Naive thymus-derived CD4-positive, alpha-beta T cell (primary cell): ENCODE measurements at regions of chr17 and their contacts with region 1.

Region 1: DNA sequence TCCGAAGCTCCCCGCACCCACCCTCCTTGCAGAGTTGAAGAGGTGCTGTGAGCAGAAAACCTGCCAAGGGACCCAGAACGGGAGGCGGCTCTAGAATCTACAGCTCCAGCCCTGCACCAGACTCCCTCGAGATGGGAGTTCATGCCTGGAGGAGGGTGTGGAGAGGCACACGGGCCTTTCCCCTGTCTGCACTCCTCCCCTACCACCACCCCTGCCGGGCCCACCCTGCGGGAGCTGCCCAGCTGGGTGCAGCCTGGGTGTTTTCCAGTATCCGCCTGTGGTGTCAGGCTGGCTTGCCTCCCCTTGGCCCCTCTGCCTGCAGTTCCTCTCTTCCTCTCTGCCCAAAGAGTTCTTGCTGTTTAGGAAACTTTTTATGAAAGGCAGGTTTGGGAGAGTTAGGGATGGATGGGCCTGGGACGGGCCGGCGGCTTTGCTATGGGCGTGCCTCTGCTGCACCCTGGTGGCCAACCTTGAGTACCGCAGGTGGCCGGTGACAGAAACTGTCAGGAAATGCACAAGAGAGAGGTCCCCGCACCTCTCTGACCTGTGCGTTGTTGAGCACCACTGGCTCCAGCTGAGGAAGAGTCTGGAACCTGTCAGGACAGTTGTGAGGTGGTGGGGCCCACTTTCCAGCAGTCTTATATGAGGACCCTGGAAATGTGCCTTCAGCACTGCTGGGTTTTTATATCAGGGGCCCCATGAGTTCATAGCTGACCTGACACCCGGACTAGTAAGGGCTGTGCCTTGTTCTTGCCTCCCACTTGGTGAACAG is 354.1 kb downstream of the SEC14L1 start:
- DNase-seq: peak; percentile 60 to 82 (median 70)
- ATAC-seq: peak; percentile 90
- H3K4me3 ChIP-seq: no peak overlapping the region
- H3K4me3 Mint-ChIP-seq: peak overlapping the region in 6 of 10 donors; percentile 19 to 54 (median 44)
- H3K27ac ChIP-seq: peak overlapping the region; percentile 27
- H3K27ac Mint-ChIP-seq: peak overlapping the region; percentile 71 to 94 (median 91)
- H3K4me1 ChIP-seq: peaks cover 11 to 21% of the 10 kb centered on the region in 2 donors
- H3K4me1 Mint-ChIP-seq: peaks cover 5 to 37% (median 20%) of the 10 kb centered on the region in 7 donors
- H3K27me3 ChIP-seq: no peaks in the 10 kb centered on the region
- H3K27me3 Mint-ChIP-seq: no peaks in the 10 kb centered on the region

Region 2: GRCh38 chr17:77363821-77364361 is 131.0 kb before region 1 on chr17:
- CTCF ChIA-PET with region 1: no interaction called
- POLR2A ChIA-PET with region 1: no interaction called
- intact Hi-C with region 1: no loop called
- DNase-seq: peak in 4 of 9 donors; percentile 47 to 55 (median 50)
- ATAC-seq: peak; percentile 69
- H3K4me3 ChIP-seq: peak overlapping the region; percentile 40
- H3K4me3 Mint-ChIP-seq: peak overlapping the region; percentile 26 to 86 (median 76)
- H3K27ac ChIP-seq: peak overlapping the region; percentile 30
- H3K27ac Mint-ChIP-seq: peak overlapping the region in 8 of 9 donors; percentile 53 to 93 (median 80)
- H3K4me1 ChIP-seq: peaks cover 0 to 53% of the 10 kb centered on the region in 2 donors
- H3K4me1 Mint-ChIP-seq: peaks cover 39 to 62% (median 40%) of the 10 kb centered on the region in 7 donors
- H3K27me3 ChIP-seq: no peaks in the 10 kb centered on the region
- H3K27me3 Mint-ChIP-seq: peaks cover 0 to 11% (median 0%) of the 10 kb centered on the region in 5 donors

Region 3: DNA sequence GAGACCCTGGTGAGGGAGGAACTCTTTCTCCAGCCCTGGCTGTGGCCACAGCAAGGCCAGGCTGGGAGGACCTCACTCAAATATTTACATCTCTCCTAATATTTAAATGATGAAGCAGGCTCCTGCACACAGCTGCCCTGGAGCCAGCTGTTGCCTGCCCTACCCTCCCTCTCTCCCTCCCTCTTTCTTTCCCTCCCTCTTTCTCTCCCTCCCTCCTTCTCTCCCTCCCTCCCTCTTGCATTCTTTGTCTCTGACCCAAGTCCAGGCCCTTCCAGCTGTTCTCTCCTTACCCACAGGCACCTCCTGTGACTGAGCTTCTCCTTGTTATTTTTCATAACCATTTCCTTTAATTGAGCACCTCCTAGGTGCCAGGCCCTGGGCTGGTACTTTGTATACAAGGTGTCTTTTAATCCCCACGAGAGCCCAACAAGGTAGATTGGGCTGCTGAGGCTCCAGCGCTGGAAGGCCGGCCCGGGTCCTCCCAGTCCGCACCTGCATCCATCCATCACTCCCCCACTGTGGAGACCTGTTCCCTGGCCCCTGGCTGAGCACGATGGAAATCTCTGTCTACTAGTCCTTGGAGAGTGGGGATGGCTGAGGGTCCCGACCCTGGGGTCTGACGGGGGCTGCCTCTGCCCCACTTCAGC is 111.8 kb before region 1 on chr17:
- CTCF ChIA-PET with region 1: interaction called, 7 read pairs
- POLR2A ChIA-PET with region 1: interaction called, 6 read pairs
- intact Hi-C with region 1: loop called in 1 of 2 experiments (anchors 1 kb)
- DNase-seq: no peak
- ATAC-seq: no peak
- H3K4me3 ChIP-seq: peak overlapping the region; percentile 17
- H3K4me3 Mint-ChIP-seq: peak overlapping the region; percentile 60 to 90 (median 86)
- H3K27ac ChIP-seq: peak overlapping the region; percentile 58
- H3K27ac Mint-ChIP-seq: peak overlapping the region; percentile 76 to 94 (median 93)
- H3K4me1 ChIP-seq: peaks cover 73 to 83% of the 10 kb centered on the region in 2 donors
- H3K4me1 Mint-ChIP-seq: peaks cover 59 to 94% (median 89%) of the 10 kb centered on the region in 7 donors
- H3K27me3 ChIP-seq: no peaks in the 10 kb centered on the region
- H3K27me3 Mint-ChIP-seq: no peaks in the 10 kb centered on the region

Region 4: DNA sequence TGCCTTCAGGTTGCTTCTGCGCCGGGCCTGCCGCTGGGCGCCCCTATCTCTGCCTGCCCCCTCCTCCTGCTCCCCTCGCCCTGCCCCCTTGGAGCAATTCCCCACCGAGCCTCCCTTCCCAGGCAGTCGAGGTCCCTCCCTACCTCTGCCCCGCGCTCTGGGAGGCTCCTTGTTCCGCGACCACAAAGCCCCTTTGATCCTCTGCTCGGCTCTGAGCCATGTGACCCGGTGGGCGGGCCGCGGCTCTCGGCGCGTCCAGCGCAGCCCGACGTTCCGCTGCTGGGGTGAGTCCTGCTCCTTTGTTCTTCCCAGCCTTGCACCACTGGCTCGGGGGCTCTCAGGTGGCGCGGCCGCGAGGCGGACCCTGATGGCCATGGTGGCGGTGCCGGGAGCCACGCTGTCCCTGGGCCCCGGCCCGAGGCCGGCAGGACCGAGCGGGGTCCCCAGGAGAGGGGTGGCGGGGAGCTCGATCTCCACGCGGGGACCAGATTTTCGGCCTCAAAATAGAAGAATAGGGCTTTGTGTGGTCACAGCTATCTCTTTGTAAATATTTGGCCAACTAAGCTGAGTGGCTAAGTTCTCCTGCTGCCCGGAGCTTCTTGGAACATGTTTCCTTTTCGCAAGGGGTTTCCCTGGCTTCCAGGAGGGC is 43.5 kb before region 1 on chr17:
- CTCF ChIA-PET with region 1: interaction called, 3 read pairs
- POLR2A ChIA-PET with region 1: interaction called, 6 read pairs
- intact Hi-C with region 1: loop called in 1 of 2 experiments (anchors 1 kb)
- DNase-seq: peak in 8 of 9 donors; percentile 64 to 82 (median 74)
- ATAC-seq: peak; percentile 75
- H3K4me3 ChIP-seq: peak overlapping the region; percentile 77
- H3K4me3 Mint-ChIP-seq: peak overlapping the region; percentile 92 to 100 (median 98)
- H3K27ac ChIP-seq: peak overlapping the region; percentile 92
- H3K27ac Mint-ChIP-seq: peak overlapping the region; percentile 93 to 100 (median 98)
- H3K4me1 ChIP-seq: peaks cover 31 to 40% of the 10 kb centered on the region in 2 donors
- H3K4me1 Mint-ChIP-seq: peaks cover 31 to 73% (median 37%) of the 10 kb centered on the region in 7 donors
- H3K27me3 ChIP-seq: no peaks in the 10 kb centered on the region
- H3K27me3 Mint-ChIP-seq: no peaks in the 10 kb centered on the region

Region 5: DNA sequence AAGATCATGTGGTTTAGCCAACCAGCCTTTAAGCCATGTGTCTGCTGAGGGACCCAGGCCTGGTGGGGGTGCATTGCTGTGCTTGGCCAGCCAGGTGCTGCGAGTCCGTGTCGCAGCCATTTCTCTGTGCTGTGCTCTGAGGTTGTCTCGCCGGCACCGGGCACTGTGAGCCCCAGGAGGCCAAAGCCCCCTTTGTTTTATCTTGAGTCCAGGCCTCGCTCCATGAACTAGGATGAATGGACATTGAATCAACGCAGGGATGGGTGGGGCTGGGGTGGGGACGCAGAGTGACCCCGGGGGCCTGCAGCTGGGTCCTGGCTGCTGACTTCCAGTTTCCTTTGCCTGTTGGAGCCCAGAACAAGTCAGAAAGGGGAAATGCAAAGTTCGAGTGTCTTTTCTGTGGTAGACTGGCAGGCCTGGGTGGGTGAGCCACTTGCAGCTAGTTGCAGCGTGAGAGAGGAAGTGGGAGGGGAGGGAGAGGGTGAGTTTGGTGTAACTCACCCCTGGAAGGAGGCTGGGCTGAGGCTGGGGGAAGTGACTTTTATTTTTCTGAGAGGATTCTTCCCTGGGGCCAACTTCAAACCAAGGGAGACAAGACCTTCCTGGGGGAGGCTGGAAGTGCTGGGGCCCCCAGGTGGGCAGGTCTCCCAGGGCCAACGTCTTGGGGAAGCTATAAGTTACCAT is 29.4 kb before region 1 on chr17:
- CTCF ChIA-PET with region 1: interaction called, 6 read pairs
- POLR2A ChIA-PET with region 1: interaction called, 5 read pairs
- intact Hi-C with region 1: loop called in 1 of 2 experiments (anchors 1 kb)
- DNase-seq: peak in 8 of 9 donors; percentile 67 to 89 (median 87)
- ATAC-seq: peak; percentile 97
- H3K4me3 ChIP-seq: peak overlapping the region; percentile 54
- H3K4me3 Mint-ChIP-seq: peak overlapping the region; percentile 79 to 87 (median 84)
- H3K27ac ChIP-seq: peak overlapping the region; percentile 64
- H3K27ac Mint-ChIP-seq: peak overlapping the region; percentile 88 to 100 (median 94)
- H3K4me1 ChIP-seq: peaks cover 88 to 90% of the 10 kb centered on the region in 2 donors
- H3K4me1 Mint-ChIP-seq: peaks cover 74 to 96% (median 86%) of the 10 kb centered on the region in 7 donors
- H3K27me3 ChIP-seq: no peaks in the 10 kb centered on the region
- H3K27me3 Mint-ChIP-seq: no peaks in the 10 kb centered on the region

Region 6: DNA sequence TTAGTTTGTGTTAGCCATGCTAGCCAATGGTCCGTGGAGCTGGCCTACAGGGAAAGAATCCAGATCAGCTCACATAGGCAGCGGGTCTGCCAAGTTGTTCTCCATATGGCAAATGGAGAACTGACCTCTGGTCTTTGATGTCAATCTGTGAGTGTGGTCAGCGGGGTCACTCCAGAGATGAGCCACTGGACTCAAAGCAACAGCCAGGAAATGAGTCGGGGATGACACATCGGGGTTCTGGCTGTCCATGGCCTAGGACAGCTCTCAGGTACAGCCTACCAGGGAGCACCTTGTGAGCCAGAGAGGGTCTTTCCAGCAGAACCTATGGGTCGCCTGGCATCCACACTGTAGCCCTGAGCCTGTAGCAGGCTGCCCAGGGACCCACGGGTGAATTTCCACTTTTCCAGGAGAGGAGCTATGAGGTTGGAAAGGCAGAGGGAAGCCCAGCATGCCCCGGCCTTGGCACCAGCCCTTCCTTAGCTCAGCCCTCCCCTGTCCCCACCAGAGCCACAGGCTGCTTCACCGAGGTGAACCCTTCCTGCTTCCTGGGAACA is 260.6 kb after region 1 on chr17:
- CTCF ChIA-PET with region 1: no interaction called
- POLR2A ChIA-PET with region 1: no interaction called
- intact Hi-C with region 1: no loop called
- DNase-seq: no peak
- ATAC-seq: no peak
- H3K4me3 ChIP-seq: no peak overlapping the region
- H3K4me3 Mint-ChIP-seq: no peak overlapping the region
- H3K27ac ChIP-seq: no peak overlapping the region
- H3K27ac Mint-ChIP-seq: no peak overlapping the region
- H3K4me1 ChIP-seq: no peaks in the 10 kb centered on the region
- H3K4me1 Mint-ChIP-seq: no peaks in the 10 kb centered on the region
- H3K27me3 ChIP-seq: no peaks in the 10 kb centered on the region
- H3K27me3 Mint-ChIP-seq: peaks cover 0 to 2% (median 0%) of the 10 kb centered on the region in 5 donors

Region 7: DNA sequence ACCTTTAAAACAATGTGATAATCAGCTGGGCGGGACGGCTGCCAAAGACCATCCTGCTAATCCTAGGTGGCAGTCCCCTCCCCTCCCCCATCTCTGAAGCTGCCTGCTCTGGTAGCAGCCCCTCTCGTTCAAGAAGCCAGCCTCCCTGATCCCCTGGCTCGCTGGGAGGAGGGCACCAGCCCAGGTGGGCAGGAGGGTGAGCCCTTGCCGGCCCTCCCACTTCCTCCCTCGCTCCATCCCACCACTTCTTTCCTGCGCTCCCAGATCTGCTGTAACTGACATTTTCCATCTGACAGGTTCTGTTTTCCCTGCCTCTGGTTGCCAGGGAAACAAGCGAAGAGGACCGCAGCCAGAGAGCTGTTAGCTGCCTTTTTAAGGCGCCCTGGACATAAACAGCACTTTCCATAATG is 308.0 kb after region 1 on chr17:
- CTCF ChIA-PET with region 1: no interaction called
- POLR2A ChIA-PET with region 1: no interaction called
- intact Hi-C with region 1: no loop called
- DNase-seq: no peak
- ATAC-seq: no peak
- H3K4me3 ChIP-seq: no peak overlapping the region
- H3K4me3 Mint-ChIP-seq: no peak overlapping the region
- H3K27ac ChIP-seq: no peak overlapping the region
- H3K27ac Mint-ChIP-seq: no peak overlapping the region
- H3K4me1 ChIP-seq: no peaks in the 10 kb centered on the region
- H3K4me1 Mint-ChIP-seq: peaks cover 0 to 11% (median 0%) of the 10 kb centered on the region in 7 donors
- H3K27me3 ChIP-seq: no peaks in the 10 kb centered on the region
- H3K27me3 Mint-ChIP-seq: peaks cover 0 to 42% (median 10%) of the 10 kb centered on the region in 5 donors